GM12878 (cell line): ENCODE measurements at regions of chr12 and their contacts with region 1.

Region 1: GRCh38 chr12:88993651-88994050 is 358.6 kb downstream of the DUSP6 start:
- DNase-seq: no peak
- ATAC-seq: peak; percentile 75
- H3K4me3 ChIP-seq: no peak overlapping the region
- H3K27ac ChIP-seq: no peak overlapping the region
- H3K4me1 ChIP-seq: no peaks in the 10 kb centered on the region
- H3K27me3 ChIP-seq: no peaks in the 10 kb centered on the region
- CTCF ChIP-seq: peak; percentile 31 to 54 (median 37); a peak in 4 of 6 replicates
- EP300 ChIP-seq: no peak
- POLR2A ChIP-seq: no peak
- RAD21 ChIP-seq: peak; percentile 62

Region 2: GRCh38 chr12:88111074-88111652 is 882.5 kb before region 1 on chr12:
- CTCF ChIA-PET with region 1: interaction called, 13 read pairs
- POLR2A ChIA-PET with region 1: no interaction called
- RAD21 ChIA-PET with region 1: interaction called, 3 read pairs
- SMC1A ChIA-PET with region 1: no interaction called
- in situ Hi-C with region 1: loop called (anchors 10 kb)
- intact Hi-C with region 1: loop called (anchors 1 kb)
- DNase-seq: peak; percentile 2
- ATAC-seq: no peak
- H3K4me3 ChIP-seq: no peak overlapping the region
- H3K27ac ChIP-seq: no peak overlapping the region
- H3K4me1 ChIP-seq: no peaks in the 10 kb centered on the region
- H3K27me3 ChIP-seq: no peaks in the 10 kb centered on the region
- CTCF ChIP-seq: peak; percentile 13 to 53 (median 35); a peak in 4 of 6 replicates
- EP300 ChIP-seq: no peak
- POLR2A ChIP-seq: no peak
- RAD21 ChIP-seq: peak; percentile 67

Region 3: GRCh38 chr12:88153959-88154358 is 839.7 kb before region 1 on chr12:
- CTCF ChIA-PET with region 1: interaction called, 15 read pairs
- POLR2A ChIA-PET with region 1: no interaction called
- RAD21 ChIA-PET with region 1: interaction called, 6 read pairs
- SMC1A ChIA-PET with region 1: interaction called, 14 read pairs
- in situ Hi-C with region 1: no loop called
- intact Hi-C with region 1: loop called (anchors 5 kb)
- DNase-seq: no peak
- ATAC-seq: 0 out of 3 replicates have a peak, but pooled peaks have one; percentile 25
- H3K4me3 ChIP-seq: no peak overlapping the region
- H3K27ac ChIP-seq: no peak overlapping the region
- H3K4me1 ChIP-seq: no peaks in the 10 kb centered on the region
- H3K27me3 ChIP-seq: no peaks in the 10 kb centered on the region
- CTCF ChIP-seq: peak in 1 of 3 experiments; percentile 17; a peak in 1 of 6 replicates
- EP300 ChIP-seq: no peak
- POLR2A ChIP-seq: no peak
- RAD21 ChIP-seq: peak; percentile 46; the same call in 1 of the 2 replicates

Region 4: DNA sequence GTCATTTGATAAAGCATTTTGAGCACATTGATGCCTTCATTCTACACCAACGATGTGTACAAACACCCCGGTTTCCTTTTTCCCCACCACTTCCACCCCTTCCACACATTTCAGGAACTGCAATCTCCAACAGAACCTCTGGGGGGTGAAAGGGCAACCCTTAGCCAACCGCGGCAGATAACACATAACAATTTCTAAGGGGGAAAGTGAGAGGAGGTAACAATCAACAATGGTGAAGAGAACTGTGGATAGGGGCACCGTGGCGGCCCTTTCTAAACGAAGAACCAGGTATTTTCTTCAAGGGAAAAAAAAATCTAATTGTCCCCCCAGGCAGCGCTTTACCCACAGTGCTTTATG is 414.5 kb before region 1 on chr12:
- CTCF ChIA-PET with region 1: no interaction called
- POLR2A ChIA-PET with region 1: no interaction called
- RAD21 ChIA-PET with region 1: no interaction called
- SMC1A ChIA-PET with region 1: interaction called, 4 read pairs
- in situ Hi-C with region 1: no loop called
- intact Hi-C with region 1: loop called (anchors 5 kb)
- DNase-seq: no peak
- ATAC-seq: peak; percentile 12; the same call in 1 of the 3 replicates
- H3K4me3 ChIP-seq: no peak overlapping the region
- H3K27ac ChIP-seq: no peak overlapping the region
- H3K4me1 ChIP-seq: no peaks in the 10 kb centered on the region
- H3K27me3 ChIP-seq: peaks cover 5 to 14% of the 10 kb centered on the region in 2 experiments
- CTCF ChIP-seq: no peak
- EP300 ChIP-seq: no peak
- POLR2A ChIP-seq: no peak
- RAD21 ChIP-seq: no peak

Region 5: DNA sequence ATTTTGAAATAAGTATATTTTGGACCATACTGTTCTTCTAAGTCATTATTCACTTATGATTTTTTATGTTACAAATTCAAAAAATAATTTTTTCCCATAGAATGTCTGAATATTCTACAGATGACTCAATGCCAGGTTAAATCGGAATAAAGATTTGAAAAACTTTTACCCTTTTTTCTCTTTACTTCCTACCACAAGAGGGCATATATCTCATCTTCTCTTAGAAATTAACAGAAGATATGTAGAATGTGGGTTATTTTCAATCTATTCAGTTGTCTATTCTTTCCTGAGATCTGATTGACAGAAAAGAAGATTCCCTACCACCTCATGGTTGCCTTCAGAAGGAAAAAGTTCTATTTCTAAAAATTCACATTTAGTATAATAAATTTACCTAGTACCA is 360.3 kb before region 1 on chr12:
- CTCF ChIA-PET with region 1: interaction called, 8 read pairs
- POLR2A ChIA-PET with region 1: no interaction called
- RAD21 ChIA-PET with region 1: no interaction called
- SMC1A ChIA-PET with region 1: no interaction called
- in situ Hi-C with region 1: no loop called
- intact Hi-C with region 1: loop called (anchors 2 kb)
- DNase-seq: no peak
- ATAC-seq: no peak
- H3K4me3 ChIP-seq: no peak overlapping the region
- H3K27ac ChIP-seq: no peak overlapping the region
- H3K4me1 ChIP-seq: no peaks in the 10 kb centered on the region
- H3K27me3 ChIP-seq: no peaks in the 10 kb centered on the region
- CTCF ChIP-seq: peak in 1 of 3 experiments; percentile 8; a peak in 1 of 6 replicates
- EP300 ChIP-seq: no peak
- POLR2A ChIP-seq: no peak
- RAD21 ChIP-seq: no peak

Region 6: DNA sequence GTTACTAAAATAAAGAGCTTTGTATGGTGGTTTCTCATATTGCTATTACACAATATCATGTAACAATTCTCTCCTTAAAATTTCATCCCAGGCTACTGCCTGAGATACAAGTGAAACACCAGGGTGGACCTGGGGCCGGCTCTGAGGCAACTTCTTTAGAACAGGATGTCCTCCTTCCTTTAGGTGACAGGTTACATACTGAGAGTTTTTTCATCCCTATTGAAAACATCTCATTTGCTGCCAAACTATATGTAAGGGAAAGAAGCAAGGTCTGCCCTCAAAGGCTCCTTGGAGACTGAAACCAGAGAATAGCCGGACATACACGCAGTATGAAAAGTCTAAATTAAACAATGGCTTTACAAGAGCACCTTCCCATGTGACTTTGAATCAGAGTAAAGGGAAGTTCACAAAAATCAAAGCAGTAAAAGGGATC is 218.7 kb after region 1 on chr12:
- CTCF ChIA-PET with region 1: no interaction called
- POLR2A ChIA-PET with region 1: no interaction called
- RAD21 ChIA-PET with region 1: no interaction called
- SMC1A ChIA-PET with region 1: no interaction called
- in situ Hi-C with region 1: no loop called
- intact Hi-C with region 1: no loop called
- DNase-seq: no peak
- ATAC-seq: no peak
- H3K4me3 ChIP-seq: no peak overlapping the region
- H3K27ac ChIP-seq: no peak overlapping the region
- H3K4me1 ChIP-seq: no peaks in the 10 kb centered on the region
- H3K27me3 ChIP-seq: no peaks in the 10 kb centered on the region
- CTCF ChIP-seq: no peak
- EP300 ChIP-seq: no peak
- POLR2A ChIP-seq: no peak
- RAD21 ChIP-seq: no peak

Region 7: DNA sequence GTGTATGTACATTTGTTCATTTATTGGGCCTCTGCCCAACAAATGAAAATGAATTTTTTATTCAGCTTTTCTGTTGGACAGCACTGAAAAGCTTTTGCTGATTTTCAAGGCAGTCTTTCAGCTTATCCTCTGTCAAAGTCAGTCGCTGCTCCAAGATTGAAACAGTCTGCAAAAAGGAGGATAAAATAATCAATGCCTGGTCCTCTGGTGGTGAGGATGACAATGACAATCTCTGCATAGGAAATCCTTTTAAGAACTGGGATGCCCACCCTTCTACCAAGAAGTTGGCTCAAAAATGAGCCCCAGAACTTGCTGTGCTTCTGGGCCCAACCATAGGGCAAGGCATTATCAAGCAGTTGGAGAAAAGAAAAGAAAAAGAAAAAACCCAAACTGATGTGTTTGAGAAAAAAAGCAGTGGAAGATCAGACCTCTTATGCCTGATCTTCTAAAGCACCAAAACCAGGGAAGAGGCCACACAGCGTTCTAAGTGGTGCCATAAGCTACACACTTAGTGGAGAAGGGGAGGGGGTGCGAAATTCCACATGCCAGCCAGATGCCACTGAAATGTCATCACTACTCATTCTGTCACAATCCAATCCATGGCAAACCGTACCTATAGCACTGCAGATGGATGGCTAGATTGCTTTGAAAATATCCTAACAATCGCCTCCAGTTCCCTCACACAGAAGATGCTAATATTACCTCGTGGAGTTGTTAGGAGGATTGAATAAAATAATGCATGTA is 427.6 kb after region 1 on chr12:
- CTCF ChIA-PET with region 1: no interaction called
- POLR2A ChIA-PET with region 1: no interaction called
- RAD21 ChIA-PET with region 1: no interaction called
- SMC1A ChIA-PET with region 1: no interaction called
- in situ Hi-C with region 1: no loop called
- intact Hi-C with region 1: no loop called
- DNase-seq: no peak
- ATAC-seq: no peak
- H3K4me3 ChIP-seq: no peak overlapping the region
- H3K27ac ChIP-seq: no peak overlapping the region
- H3K4me1 ChIP-seq: no peaks in the 10 kb centered on the region
- H3K27me3 ChIP-seq: no peaks in the 10 kb centered on the region
- CTCF ChIP-seq: no peak
- EP300 ChIP-seq: no peak
- POLR2A ChIP-seq: no peak
- RAD21 ChIP-seq: no peak